ENCODE measurements at regions of chr7 and their contacts with region 1.

Region 1: DNA sequence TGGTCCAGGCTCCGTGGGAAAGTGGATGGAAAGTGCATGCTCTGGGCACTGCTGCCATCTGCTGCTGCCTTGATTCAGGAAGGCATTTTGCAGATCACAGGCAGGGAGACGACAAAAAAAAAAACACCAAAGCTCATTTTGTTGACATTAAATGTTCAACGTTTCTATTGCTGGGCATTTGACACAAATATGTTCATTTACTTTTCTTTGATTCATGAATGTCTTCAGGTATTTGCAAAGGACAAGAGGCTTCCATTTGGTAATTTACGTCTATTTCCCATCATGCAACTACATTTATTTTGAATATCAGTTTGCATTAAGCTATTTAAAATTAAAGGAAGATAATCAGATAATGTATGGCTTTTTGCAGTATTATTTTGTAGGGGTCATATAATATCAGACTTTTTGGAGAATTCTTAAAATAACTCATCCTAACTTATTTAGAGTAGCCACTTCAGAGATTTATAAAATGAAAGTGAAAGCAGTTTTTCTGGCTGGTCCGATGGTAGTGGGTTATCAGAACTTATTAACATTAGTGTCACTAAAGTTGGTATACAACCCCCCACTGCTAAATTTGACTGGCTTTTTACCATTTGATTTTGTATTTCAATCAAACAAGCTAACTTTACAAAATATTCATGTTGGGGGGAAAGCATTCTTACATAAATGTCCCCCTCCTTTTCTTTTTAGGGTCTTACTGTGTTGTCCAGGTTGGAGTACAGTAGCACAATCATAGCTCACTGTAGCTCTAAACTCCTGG is 65.3 kb downstream of the PDIA4 start:
- DNase-seq: peak; percentile 87
- ATAC-seq: peak; percentile 60
- H3K4me3 ChIP-seq: peak overlapping the region; percentile 66 to 100 (median 75)
- H3K4me3 Mint-ChIP-seq: peak overlapping the region; percentile 98
- H3K27ac ChIP-seq: peak overlapping the region; percentile 56 to 89
- H3K27ac Mint-ChIP-seq: peak overlapping the region; percentile 90
- H3K4me1 ChIP-seq: peaks cover 9 to 27% of the 10 kb centered on the region in 2 donors
- H3K4me1 Mint-ChIP-seq: peaks cover 28% of the 10 kb centered on the region
- H3K27me3 ChIP-seq: no peaks in the 10 kb centered on the region
- H3K27me3 Mint-ChIP-seq: no peaks in the 10 kb centered on the region
- CTCF ChIP-seq: peak; percentile 78

Region 2: DNA sequence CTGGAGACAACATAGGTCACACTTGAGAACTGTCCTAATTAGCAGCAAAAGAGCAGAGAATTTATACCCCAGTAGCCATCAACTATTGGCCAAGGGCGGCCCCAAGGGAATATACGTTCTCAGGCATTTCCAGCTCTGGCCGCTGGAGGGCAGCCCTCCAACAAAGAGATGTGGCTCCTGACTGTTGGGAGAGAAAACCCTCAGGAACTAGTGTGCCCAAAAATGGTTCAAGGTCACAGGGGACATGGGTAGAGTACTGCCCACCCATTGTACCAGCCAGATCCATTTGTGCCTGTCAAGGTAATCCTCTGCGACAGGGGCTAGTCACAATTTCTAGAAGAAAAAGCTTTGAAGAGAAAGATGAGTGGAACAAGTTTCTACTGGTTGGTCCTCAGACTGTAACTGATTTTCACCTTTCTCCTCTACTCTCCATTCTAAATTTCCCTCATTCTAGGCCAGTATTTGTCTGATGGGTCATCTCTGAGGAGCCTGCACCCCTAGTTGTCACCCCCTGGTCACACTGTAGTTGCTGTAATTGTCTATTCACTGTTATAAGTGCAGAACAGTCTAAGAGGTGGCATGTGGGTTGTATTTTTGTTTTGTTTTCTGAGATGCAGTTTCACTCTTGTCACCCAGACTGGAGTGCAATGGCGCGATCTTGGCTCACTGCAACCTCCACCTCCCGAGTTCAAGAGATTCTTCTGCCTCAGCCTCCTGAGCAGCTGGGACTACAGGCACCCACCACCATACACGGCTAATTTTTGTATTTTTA is 387.2 kb before region 1 on chr7:
- CTCF ChIA-PET with region 1: interaction called, 48 read pairs
- POLR2A ChIA-PET with region 1: no interaction called
- intact Hi-C with region 1: no loop called
- DNase-seq: peak; percentile 75
- ATAC-seq: peak; percentile 82
- H3K4me3 ChIP-seq: no peak overlapping the region
- H3K4me3 Mint-ChIP-seq: no peak overlapping the region
- H3K27ac ChIP-seq: no peak overlapping the region
- H3K27ac Mint-ChIP-seq: no peak overlapping the region
- H3K4me1 ChIP-seq: peaks cover 0 to 5% of the 10 kb centered on the region in 2 donors
- H3K4me1 Mint-ChIP-seq: no peaks in the 10 kb centered on the region
- H3K27me3 ChIP-seq: no peaks in the 10 kb centered on the region
- H3K27me3 Mint-ChIP-seq: no peaks in the 10 kb centered on the region
- CTCF ChIP-seq: peak; percentile 83

Region 3: DNA sequence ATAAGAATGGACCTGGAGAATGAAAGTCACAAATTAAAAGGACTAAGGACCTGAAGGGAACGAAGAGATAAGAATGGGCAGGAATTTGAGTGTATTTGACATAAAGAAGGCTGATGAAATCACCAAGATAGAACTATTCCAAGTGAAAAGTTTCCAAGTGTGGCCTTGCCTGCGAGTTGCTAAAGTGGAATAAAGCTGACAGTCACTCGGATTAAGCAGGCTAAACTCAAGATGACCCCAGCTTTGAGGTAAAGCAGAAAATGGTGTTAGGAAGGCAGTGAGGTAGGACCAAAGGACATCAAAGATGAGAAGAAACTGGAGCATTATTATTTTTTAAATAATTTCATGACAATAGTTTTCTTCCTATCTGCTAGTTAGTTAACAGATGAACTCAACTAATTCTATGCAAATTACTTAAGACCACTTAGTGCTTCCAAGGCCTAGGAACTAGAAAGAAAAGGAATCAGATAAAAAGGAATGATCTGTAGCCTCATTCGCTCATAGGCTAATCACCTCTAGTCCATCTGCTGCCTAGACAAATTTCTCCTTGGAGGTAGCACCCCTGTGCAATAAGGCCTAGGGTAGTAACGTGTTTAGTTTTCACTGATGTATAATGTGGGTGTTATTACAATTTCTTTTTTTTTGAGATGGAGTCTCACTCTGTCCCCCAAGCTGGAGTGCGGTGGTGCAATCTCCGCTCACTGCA is 113.5 kb before region 1 on chr7:
- CTCF ChIA-PET with region 1: interaction called, 9 read pairs
- POLR2A ChIA-PET with region 1: interaction called, 13 read pairs
- intact Hi-C with region 1: no loop called
- DNase-seq: no peak
- ATAC-seq: no peak
- H3K4me3 ChIP-seq: no peak overlapping the region
- H3K4me3 Mint-ChIP-seq: no peak overlapping the region
- H3K27ac ChIP-seq: no peak overlapping the region
- H3K27ac Mint-ChIP-seq: no peak overlapping the region
- H3K4me1 ChIP-seq: no peaks in the 10 kb centered on the region
- H3K4me1 Mint-ChIP-seq: peaks cover 12% of the 10 kb centered on the region
- H3K27me3 ChIP-seq: no peaks in the 10 kb centered on the region
- H3K27me3 Mint-ChIP-seq: no peaks in the 10 kb centered on the region
- CTCF ChIP-seq: no peak

Region 4: DNA sequence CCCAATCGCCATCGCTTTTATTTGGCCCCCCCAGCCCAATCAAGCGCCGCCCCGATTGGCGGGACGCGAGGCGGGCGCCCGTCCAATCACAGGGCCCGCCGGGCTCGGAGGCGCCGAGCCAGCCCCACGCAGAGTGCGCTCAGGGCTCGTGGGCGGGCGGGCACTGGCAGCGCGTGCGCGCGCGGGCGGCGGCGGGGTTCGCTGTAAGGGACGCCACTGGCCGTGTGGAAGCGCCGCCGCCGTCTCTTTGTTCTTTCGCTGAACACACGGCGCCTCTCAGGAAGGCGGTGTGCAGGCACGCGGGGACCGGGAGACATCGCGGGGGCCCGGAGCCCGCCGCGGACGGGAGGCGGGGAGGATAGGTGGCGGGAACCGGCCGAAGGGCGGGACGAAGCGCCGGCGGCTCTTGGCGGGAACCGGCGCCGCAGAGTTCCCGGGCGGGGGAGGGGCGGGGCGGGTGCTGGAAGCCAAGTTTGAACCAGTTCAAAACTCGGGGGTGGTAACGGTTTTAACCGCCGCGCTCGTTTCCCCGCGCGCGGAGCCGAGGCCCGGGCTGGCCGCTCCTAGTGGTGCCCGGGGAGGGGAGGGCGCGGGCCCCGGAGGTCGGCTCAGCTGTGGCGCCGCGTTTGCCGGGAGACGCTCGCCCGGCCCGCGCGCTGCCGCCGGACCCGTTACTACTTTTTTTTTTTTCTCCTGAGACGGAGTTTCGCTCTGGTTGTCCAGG is 78.5 kb before region 1 on chr7:
- CTCF ChIA-PET with region 1: interaction called, 5 read pairs
- POLR2A ChIA-PET with region 1: no interaction called
- intact Hi-C with region 1: loop called (anchors 1 kb)
- DNase-seq: peak; percentile 96
- ATAC-seq: peak; percentile 93
- H3K4me3 ChIP-seq: peak overlapping the region; percentile 17 to 81 (median 64)
- H3K4me3 Mint-ChIP-seq: peak overlapping the region; percentile 91
- H3K27ac ChIP-seq: peak overlapping the region; percentile 75 to 99
- H3K27ac Mint-ChIP-seq: peak overlapping the region; percentile 93
- H3K4me1 ChIP-seq: peaks cover 11 to 16% of the 10 kb centered on the region in 2 donors
- H3K4me1 Mint-ChIP-seq: peaks cover 14% of the 10 kb centered on the region
- H3K27me3 ChIP-seq: no peaks in the 10 kb centered on the region
- H3K27me3 Mint-ChIP-seq: no peaks in the 10 kb centered on the region
- CTCF ChIP-seq: no peak